ENCODE measurements at regions of chr18 and their contacts with region 1.

Region 1: DNA sequence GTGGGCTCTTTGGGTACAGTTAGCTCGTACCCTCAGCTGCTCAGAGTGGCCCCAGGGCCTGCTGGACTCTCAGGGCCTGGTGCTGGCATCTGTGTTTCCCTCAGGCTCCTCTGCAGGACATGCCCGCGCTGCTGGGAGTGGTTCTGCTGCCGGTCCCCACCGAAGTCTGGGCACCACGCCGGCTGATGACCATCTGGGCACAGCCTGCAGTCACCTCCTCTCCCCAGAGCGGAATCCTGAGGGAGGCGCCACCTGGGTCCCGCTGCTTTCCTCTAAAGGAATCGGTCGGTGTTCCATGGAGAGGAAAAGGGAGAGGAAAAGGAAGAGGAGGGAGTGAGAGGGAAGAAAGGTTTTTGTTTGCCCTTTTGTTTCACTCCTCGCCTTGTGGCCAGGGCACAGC is 43.6 kb downstream of the MC2R start:
- DNase-seq: no peak
- ATAC-seq: no peak
- H3K4me3 ChIP-seq: no peak overlapping the region
- H3K27ac ChIP-seq: no peak overlapping the region
- H3K4me1 ChIP-seq: peaks cover 0 to 5% (median 0%) of the 10 kb centered on the region in 12 donors
- H3K27me3 ChIP-seq: peaks cover 0 to 61% (median 33%) of the 10 kb centered on the region in 9 donors
- CTCF ChIP-seq: no peak
- POLR2A ChIP-seq: no peak

Region 2: DNA sequence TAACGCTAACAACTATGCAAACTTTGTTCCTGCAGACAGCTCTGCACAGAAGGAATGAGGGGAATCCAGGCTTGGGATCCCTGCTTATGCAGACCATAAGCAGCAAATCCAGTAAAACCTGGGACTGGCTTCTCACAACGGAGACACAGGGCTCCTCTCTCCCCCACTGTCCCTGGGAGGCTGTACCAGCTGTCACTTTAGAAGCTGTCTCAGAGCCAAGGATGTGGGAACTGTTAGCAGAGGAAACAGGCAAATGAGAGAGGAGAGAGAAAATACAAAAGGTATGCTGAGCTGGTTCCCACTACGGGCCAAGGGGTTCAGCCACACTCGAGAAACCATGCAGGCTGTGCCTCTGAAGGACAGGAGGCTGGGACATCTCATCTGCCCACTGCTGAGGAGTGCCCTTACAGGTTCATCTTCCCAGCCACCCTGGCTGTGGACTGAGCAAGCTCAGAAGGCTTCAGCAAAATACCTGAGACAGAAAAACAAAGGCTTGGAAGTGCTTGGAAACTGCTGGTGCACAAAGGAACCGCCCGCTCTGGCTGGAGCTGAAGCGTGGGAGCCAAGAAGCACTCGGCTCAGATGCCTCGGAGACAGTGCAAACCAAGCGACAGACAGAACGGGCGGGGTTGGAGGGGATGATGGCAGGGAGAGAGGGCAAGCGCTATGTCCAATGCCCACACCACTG is 217.8 kb before region 1 on chr18:
- intact Hi-C with region 1: no loop called
- DNase-seq: no peak
- ATAC-seq: peak in 2 of 4 donors; percentile 19 to 38
- H3K4me3 ChIP-seq: no peak overlapping the region
- H3K27ac ChIP-seq: no peak overlapping the region
- H3K4me1 ChIP-seq: peaks cover 0 to 17% (median 0%) of the 10 kb centered on the region in 12 donors
- H3K27me3 ChIP-seq: no peaks in the 10 kb centered on the region
- CTCF ChIP-seq: no peak
- POLR2A ChIP-seq: no peak

Region 3: GRCh38 chr18:13934676-13935075 is 63.0 kb after region 1 on chr18:
- intact Hi-C with region 1: loop called in 1 of 10 experiments (anchors 10 kb)
- DNase-seq: no peak
- ATAC-seq: no peak
- H3K4me3 ChIP-seq: no peak overlapping the region
- H3K27ac ChIP-seq: no peak overlapping the region
- H3K4me1 ChIP-seq: no peaks in the 10 kb centered on the region
- H3K27me3 ChIP-seq: no peaks in the 10 kb centered on the region
- CTCF ChIP-seq: no peak
- POLR2A ChIP-seq: no peak